Gastrocnemius medialis (tissue), 4 donors: ENCODE measurements at regions of chr16 and their contacts with region 1.

Region 1: GRCh38 chr16:10521681-10522274 is 58.6 kb downstream of the EMP2 start:
- DNase-seq: peak; percentile 29 to 42
- ATAC-seq: peak; percentile 70 to 86
- H3K4me3 ChIP-seq: no peak overlapping the region
- H3K27ac ChIP-seq: no peak overlapping the region
- H3K4me1 ChIP-seq: no peaks in the 10 kb centered on the region
- H3K27me3 ChIP-seq: no peaks in the 10 kb centered on the region
- CTCF ChIP-seq: peak; percentile 64 to 83 (median 75)
- POLR2A ChIP-seq: no peak

Region 2: DNA sequence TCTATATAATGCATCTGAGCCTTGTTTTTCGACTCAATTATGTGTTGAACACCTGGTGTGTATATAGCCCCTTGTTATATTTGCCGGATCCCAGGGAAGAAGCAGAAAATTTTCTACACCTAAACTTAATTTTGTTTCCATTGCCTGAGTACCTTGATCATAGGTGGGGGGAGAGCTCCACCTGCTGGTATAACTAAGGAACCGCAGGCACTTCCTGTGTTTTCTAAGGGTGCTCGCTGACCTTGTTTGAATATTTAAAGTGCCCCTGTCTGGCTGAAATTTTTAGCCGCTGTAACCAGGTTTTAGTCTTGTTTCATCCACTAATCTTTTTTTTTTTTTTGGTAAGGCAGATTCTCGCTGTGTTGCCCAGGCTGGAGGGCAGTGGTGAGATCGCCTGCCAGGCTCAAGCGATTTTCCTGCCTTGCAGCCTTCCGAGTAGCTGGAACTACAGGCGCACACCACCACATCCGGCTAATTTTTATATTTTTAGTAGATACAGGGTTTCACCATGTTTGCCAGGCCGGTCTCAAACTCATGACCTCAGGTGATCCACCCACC is 215.4 kb after region 1 on chr16:
- in situ Hi-C with region 1: loop called in 1 of 4 experiments (anchors 5 kb)
- intact Hi-C with region 1: no loop called
- DNase-seq: peak; percentile 36 to 63
- ATAC-seq: peak; percentile 49
- H3K4me3 ChIP-seq: peak overlapping the region in 2 of 4 donors; percentile 21 to 44
- H3K27ac ChIP-seq: peak overlapping the region; percentile 84 to 95 (median 88)
- H3K4me1 ChIP-seq: peaks cover 16 to 22% of the 10 kb centered on the region in 2 donors
- H3K27me3 ChIP-seq: no peaks in the 10 kb centered on the region
- CTCF ChIP-seq: peak; percentile 93 to 96 (median 93)
- POLR2A ChIP-seq: no peak